Calu3 (cell line): ENCODE measurements at regions of chr12 and their contacts with region 1.

Region 1: DNA sequence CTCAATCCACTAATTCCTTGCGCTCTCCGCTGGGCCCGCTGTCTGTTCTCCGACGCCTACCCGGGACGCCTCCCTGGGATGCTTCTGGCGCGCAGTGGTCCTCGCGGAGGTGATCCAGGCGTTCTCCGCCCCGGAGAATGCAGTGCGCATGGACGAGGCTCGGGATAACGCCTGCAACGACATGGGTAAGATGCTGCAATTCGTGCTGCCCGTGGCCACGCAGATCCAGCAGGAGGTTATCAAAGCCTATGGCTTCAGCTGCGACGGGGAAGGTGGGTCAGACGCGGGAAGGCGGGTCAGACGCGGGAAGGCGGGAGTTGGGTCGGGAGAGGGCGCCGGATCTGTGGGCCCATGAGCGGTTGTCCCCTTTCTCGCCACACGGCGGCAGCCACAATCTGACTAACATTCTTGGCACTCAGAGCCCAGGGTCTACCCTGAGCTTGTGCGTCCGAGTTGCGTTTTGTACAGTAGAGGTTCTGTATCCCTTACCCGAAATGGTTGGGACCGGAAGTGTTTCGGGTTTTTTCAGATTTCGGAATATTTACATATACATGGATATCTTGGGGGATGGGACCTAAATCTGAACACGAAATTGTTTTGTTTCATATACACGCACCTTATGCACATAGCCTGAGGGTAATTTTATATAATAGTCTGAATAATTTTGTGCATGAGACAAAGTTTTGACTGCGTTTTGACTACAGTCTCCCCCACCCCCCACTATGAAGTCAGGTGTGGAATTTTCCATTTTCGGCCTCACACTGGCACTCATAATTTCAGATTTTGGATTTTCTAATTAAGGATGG is 762 bp downstream of the C12orf57 start:
- DNase-seq: peak; percentile 93
- H3K4me3 Mint-ChIP-seq: peak overlapping the region; percentile 87
- H3K27ac Mint-ChIP-seq: peak overlapping the region; percentile 100
- H3K4me1 Mint-ChIP-seq: peaks cover 49% of the 10 kb centered on the region
- H3K27me3 Mint-ChIP-seq: peaks cover 13% of the 10 kb centered on the region
- CTCF ChIP-seq: peak; percentile 62

Region 2: DNA sequence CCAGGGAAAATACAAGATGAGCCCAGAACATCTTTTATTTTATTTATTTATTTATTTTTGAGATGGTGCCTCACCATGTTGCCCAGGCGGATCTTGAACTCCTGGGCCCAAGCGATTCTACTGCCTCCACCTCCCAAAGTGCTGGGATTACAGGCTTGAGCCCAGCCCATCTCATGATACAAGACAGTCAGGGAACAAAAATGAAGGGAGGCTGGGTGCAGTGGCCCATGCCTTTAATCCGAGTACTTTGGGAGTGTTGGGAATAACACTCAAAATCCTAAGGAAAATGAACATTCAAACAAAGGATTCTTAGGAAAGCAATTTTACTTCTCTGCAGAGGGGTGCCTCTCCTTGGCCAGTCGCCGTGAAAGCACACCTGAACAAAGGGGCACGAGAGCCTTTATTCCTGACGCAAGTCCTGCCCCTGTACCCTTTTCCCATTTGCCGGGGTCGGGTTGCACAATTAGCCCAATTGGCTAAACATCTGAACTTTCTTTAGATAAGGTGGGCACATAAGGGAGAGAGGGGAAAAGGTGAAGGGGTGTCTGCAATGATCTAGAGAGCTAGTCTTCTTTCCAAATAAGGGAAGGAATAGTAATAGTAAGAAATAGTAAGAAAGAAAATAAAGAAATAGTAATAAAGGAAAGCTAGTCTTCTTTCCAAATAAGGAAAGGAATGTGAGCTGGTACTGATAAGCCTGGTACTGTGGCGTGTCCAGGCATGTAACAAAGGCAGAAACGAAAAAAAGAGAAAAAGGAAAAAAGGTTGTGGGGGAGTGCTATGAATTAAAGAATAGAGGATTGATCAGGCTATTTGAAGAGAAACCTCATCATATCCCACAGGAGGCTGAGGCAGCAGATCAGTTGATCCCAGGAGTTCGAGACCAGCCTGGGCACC is 437.2 kb before region 1 on chr12:
- CTCF ChIA-PET with region 1: no interaction called
- intact Hi-C with region 1: no loop called
- DNase-seq: no peak
- H3K4me3 Mint-ChIP-seq: no peak overlapping the region
- H3K27ac Mint-ChIP-seq: no peak overlapping the region
- H3K4me1 Mint-ChIP-seq: no peaks in the 10 kb centered on the region
- H3K27me3 Mint-ChIP-seq: no peaks in the 10 kb centered on the region
- CTCF ChIP-seq: no peak

Region 3: GRCh38 chr12:6927379-6928024 is 17.1 kb before region 1 on chr12 and contains the start of gene ATN1:
- CTCF ChIA-PET with region 1: interaction called, 13 read pairs
- intact Hi-C with region 1: no loop called
- DNase-seq: peak; percentile 71
- H3K4me3 Mint-ChIP-seq: peak within 1 kb of the TSS; percentile 83
- H3K27ac Mint-ChIP-seq: peak within 1 kb of the TSS; percentile 68
- H3K4me1 Mint-ChIP-seq: peaks cover 67% of the 10 kb centered on the region
- H3K27me3 Mint-ChIP-seq: no peaks in the 10 kb centered on the region
- CTCF ChIP-seq: no peak
- total RNA-seq, gene ATN1: 59.9 and 62.0 TPM in 2 replicates

Region 4: GRCh38 chr12:6965026-6965661 is 20.6 kb after region 1 on chr12:
- CTCF ChIA-PET with region 1: interaction called, 90 read pairs
- intact Hi-C with region 1: loop called (anchors 1 kb)
- DNase-seq: peak; percentile 89
- H3K4me3 Mint-ChIP-seq: peak overlapping the region; percentile 79
- H3K27ac Mint-ChIP-seq: peak overlapping the region; percentile 87
- H3K4me1 Mint-ChIP-seq: peaks cover 50% of the 10 kb centered on the region
- H3K27me3 Mint-ChIP-seq: no peaks in the 10 kb centered on the region
- CTCF ChIP-seq: peak; percentile 90

Region 5: DNA sequence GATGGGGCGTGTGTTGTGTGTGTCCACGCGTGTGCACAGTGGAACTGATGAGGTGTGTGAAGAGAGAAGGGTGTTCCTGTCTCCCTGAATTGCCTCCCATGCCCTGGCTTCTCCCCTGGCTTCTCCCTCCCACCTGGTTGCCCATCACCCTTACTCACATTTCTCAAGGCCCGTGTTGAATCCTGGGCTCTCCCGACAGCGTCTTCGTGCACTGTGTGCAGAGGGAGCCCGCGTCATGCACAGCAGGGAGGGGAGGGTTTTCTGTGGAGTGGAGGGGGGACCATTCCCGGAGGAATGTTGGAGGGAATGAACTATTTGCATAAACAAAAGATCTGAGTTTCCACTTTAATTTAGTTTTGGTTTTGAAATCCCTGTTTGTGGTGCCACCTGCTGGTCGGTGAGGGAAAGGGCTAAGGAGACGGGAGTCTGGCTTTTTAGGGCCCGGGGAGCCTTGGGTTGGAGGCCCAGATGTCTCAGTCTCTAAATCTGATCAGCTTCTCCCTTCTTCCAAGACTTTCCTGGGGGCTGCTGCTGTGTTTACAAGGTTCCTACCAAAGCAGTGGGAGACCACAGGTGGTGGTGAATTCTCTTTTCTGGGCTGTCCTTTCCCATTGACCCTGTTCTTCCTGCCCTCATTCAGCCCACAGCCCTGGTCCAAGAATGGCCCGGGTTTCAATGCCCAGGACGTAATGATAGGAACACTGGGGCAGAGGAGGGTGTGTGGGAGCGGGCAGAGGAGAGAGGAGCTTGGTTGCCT is 147.8 kb after region 1 on chr12 and contains the start of gene C1R:
- CTCF ChIA-PET with region 1: no interaction called
- intact Hi-C with region 1: loop called (anchors 1 kb)
- DNase-seq: peak; percentile 65
- H3K4me3 Mint-ChIP-seq: peak within 1 kb of the TSS; percentile 57
- H3K27ac Mint-ChIP-seq: no peak within 1 kb of the TSS
- H3K4me1 Mint-ChIP-seq: no peaks in the 10 kb centered on the region
- H3K27me3 Mint-ChIP-seq: peaks cover 50% of the 10 kb centered on the region
- CTCF ChIP-seq: peak; percentile 85
- total RNA-seq, gene C1R: 7.6 and 7.9 TPM in 2 replicates

Region 6: GRCh38 chr12:7108796-7109571 is 164.4 kb after region 1 on chr12 and contains the start of gene C1RL:
- CTCF ChIA-PET with region 1: interaction called, 26 read pairs
- intact Hi-C with region 1: loop called (anchors 5 kb)
- DNase-seq: peak; percentile 92
- H3K4me3 Mint-ChIP-seq: peak within 1 kb of the TSS; percentile 94
- H3K27ac Mint-ChIP-seq: peak within 1 kb of the TSS; percentile 59
- H3K4me1 Mint-ChIP-seq: peaks cover 17% of the 10 kb centered on the region
- H3K27me3 Mint-ChIP-seq: no peaks in the 10 kb centered on the region
- CTCF ChIP-seq: peak; percentile 89
- total RNA-seq, gene C1RL: 43.2 and 43.4 TPM in 2 replicates

Region 7: DNA sequence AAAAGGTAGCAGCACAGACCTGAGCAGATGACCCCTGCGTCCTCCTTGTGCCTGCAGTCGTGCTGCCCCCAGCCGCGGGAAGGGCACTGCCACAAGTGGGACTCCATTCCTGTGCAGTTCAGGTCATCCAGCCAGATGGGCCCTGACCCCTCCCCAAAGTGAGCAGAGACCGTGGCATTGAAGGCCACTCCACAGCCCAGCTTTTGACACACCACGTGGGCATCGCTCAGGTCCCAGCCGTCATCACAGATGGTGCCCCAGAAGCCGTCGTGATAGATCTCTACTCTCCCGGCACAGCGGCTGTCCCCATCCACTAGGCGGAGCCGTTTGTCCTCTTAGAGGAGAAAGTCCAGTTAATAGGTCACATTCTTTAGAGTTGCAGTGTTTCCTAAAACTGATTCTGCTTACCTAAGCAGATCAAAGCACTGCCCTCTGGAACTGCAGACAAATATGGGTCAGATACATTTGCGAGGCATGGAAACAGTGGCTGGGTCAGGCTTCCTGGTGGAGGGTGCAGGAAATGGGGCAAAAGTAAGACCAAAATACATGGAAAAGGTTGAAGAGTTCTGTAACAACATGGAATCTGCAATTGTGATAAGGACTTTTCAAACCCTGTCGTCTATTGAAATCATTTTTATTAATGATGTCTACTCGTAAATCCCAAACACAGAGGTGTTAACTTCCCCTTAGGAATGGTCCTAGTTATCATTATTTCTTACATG is 430.0 kb after region 1 on chr12:
- CTCF ChIA-PET with region 1: no interaction called
- intact Hi-C with region 1: no loop called
- DNase-seq: peak; percentile 69
- H3K4me3 Mint-ChIP-seq: no peak overlapping the region
- H3K27ac Mint-ChIP-seq: no peak overlapping the region
- H3K4me1 Mint-ChIP-seq: peaks cover 17% of the 10 kb centered on the region
- H3K27me3 Mint-ChIP-seq: no peaks in the 10 kb centered on the region
- CTCF ChIP-seq: peak; percentile 65